Upper lobe of right lung (tissue), 1 donor: ENCODE measurements at regions of chr16 and their contacts with region 1.

Region 1: DNA sequence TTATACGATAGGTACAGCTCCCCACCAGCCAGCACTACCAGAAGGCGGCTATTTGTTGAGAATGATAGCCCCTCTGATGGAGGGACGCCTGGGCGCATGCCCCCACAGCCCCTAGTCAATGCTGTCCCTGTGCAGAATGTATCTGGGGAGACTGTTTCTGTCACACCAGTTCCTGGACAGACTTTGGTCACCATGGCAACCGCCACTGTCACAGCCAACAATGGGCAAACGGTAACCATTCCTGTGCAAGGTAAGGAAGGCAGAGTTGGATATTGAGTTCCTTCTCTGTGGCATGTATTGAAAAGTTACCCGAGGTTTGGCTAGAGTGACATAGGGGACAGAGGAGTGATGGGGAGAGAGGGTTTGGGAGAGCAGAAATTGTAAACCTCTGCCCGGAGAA is 33.1 kb downstream of the AKTIP start:
- DNase-seq: no peak
- ATAC-seq: no peak
- H3K4me3 ChIP-seq: no peak overlapping the region
- H3K27ac ChIP-seq: no peak overlapping the region
- H3K4me1 ChIP-seq: no peaks in the 10 kb centered on the region
- H3K27me3 ChIP-seq: no peaks in the 10 kb centered on the region
- CTCF ChIP-seq: no peak

Region 2: DNA sequence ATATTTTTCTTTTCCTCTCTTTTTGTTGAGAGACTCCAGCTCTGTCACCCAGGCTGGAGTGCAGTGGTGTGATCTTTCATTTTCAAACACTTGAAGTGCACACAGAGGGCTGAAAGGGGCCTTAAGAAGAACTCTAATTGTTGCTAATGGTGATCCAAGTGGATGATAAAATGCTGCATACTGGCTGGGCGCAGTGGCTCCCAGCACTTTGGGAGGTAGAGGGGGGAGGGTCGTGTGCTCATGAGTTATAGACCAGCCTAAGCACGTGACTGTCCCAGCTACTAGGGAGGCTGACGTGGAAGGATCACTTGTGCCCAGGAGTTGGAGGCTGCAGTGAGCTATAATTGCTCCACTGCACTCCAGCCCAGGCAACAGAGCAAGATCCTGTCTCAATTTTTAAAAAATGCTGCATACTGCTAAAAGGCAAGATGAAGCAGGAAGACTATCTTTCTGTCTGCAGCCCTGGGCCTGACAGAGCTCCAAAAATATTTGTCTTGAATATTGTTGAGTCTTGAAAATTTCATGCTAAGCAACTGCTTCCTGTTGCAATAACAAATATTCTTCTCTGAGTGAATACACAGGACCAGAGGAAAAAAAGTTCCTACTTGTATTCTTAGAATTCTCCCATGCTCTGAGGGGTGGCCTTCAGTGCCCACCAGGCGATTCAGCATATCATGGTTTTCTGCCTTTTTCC is 96.8 kb after region 1 on chr16:
- intact Hi-C with region 1: no loop called
- DNase-seq: no peak
- ATAC-seq: no peak
- H3K4me3 ChIP-seq: no peak overlapping the region
- H3K27ac ChIP-seq: no peak overlapping the region
- H3K4me1 ChIP-seq: no peaks in the 10 kb centered on the region
- H3K27me3 ChIP-seq: no peaks in the 10 kb centered on the region
- CTCF ChIP-seq: no peak

Region 3: DNA sequence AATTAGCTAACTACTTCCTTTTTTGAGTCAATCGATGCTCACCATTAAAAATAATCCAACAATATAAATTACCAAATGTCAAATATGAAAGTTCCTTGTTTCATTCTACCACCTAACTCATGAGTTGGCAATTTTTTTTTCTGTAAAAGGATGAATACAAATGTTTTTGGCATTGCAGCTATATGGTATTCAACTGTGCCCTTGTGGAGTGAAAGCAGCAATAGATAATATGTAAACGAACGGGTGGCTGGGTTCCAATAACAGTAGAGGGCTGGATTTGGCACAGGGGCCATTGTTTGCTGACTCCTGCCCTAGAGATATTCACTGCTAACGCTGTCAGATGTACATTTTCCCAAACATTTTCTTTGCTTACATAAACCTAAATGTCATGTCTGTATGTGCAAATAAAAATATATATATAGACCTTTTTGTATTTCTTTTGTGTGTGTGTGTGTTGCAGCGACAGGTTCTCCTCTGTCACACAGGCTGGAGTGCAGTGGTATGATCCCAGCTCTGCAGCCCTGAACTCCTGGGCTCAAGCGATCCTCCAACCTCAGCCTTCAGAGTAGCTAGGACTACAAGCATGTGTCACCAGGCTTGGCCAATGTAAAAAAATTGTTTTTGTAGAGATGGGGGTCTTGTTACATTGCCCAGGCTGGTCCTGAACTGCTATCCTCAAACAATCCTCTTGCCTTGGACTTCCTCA is 159.8 kb after region 1 on chr16:
- intact Hi-C with region 1: loop called (anchors 10 kb)
- DNase-seq: no peak
- ATAC-seq: no peak
- H3K4me3 ChIP-seq: no peak overlapping the region
- H3K27ac ChIP-seq: no peak overlapping the region
- H3K4me1 ChIP-seq: no peaks in the 10 kb centered on the region
- H3K27me3 ChIP-seq: no peaks in the 10 kb centered on the region
- CTCF ChIP-seq: no peak